Prostate gland (tissue), 2 donors: ENCODE measurements at regions of chr2 and their contacts with region 1.

Region 1: DNA sequence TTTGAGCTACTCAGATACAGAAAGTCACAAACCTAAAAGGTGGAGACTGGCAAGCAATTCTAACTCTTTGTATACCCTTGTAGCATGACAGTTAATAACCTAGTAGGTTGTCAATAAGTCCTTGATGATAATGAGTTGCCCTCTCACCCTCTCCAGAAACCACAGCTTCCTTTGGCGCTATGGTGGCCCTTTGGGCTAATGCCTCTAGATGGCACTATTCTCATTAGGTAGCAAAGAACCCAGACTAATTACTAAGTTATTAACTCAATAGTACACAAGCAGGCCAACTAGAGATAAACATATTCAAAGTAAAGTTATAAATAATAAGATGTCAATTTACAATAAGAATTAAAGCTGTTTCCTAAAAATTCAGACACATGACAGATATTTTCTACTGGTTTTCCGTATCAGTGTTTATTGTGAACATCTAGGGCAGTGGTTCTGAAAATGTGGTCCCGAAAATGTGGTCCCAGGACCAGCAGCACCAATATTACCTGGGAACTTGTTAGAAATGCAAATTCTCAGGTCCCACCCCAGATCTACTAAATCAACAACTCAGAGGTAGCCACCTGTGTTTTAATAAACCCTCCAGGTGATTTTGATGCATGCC is 41.1 kb downstream of the LDAH start:
- DNase-seq: no peak
- H3K4me3 ChIP-seq: no peak overlapping the region
- H3K27ac ChIP-seq: no peak overlapping the region
- H3K4me1 ChIP-seq: no peaks in the 10 kb centered on the region
- H3K27me3 ChIP-seq: no peaks in the 10 kb centered on the region
- CTCF ChIP-seq: peak in 3 of 4 experiments; percentile 50 to 65 (median 65)
- POLR2A ChIP-seq: no peak

Region 2: DNA sequence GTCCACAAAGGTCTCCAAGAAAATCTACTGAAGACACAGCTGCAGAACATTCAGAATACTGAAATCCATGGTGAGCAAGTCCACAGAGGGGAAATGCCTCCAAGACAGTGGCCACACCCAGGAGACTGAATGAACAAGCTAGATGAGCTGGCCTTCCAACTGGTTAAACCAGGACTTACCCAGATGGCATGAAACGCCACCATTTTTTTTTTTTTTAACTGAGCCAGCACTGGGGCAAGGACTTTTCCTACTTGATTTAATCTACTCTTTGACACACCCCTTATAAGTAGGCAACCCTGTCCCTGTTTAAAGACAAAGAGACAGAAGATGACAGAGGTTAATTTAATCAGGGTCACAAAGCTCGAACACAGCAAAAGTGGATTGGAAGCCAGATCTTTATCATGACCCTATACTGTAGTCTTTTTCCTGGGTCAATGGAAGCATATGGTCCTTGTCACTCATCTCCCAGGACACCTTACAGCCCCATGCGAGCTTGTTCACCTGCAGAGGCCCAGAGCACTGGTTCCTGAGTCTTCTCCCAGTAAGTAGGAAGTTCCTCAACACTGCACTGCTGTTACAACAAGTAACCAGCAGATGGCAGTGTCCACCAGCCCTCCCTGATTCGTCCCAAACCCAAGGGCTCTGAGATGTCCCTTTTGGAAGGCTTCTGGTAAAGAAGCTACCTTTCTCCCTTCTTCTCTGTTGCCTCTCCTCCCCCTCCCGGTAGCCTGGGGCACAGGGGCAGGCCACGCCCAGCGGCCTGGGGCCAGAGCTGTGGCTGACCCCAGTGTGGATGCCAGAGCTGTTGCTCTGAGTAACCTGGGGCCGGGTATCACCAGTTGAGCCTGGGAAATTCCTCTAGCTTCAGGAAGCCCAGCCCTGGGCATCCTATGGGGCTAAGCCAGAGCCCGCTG is 120.4 kb before region 1 on chr2:
- intact Hi-C with region 1: no loop called
- DNase-seq: peak; percentile 47
- H3K4me3 ChIP-seq: no peak overlapping the region
- H3K27ac ChIP-seq: no peak overlapping the region
- H3K4me1 ChIP-seq: peaks cover 4% of the 10 kb centered on the region
- H3K27me3 ChIP-seq: peaks cover 2% of the 10 kb centered on the region
- CTCF ChIP-seq: peak; percentile 94 to 98 (median 96)
- POLR2A ChIP-seq: no peak

Region 3: DNA sequence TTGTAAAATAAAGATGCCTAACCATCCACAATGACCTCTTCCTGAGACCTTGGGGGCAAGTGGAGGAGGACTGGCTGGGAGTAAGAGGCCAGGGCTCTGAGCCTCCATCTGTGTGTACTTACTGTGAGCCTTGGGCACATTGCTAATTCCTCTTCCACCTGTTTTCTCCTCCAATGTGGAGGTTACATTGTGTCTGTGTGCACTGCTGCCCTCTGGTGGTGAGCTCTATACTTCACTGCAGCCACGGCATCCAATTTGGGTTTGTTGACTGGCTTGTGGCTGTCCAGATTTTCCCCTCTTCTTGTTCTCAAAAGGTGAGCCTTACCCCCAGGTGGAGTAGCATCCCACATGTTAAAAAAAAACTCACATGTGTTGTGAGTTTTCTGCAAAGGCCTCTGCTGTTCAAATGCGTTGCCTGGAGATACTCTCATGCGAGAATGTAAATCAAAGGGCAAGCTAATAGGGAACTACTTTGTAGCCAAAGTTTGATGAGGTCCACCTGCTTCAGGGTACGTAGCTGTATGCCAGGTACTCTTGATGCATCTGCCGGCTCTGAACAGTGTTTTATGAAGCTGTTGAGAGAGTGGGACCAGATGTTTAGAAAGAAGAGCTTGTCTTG is 181.3 kb after region 1 on chr2:
- intact Hi-C with region 1: loop called (anchors 2 kb)
- DNase-seq: peak; percentile 68
- H3K4me3 ChIP-seq: no peak overlapping the region
- H3K27ac ChIP-seq: no peak overlapping the region
- H3K4me1 ChIP-seq: no peaks in the 10 kb centered on the region
- H3K27me3 ChIP-seq: no peaks in the 10 kb centered on the region
- CTCF ChIP-seq: peak; percentile 81 to 93 (median 88)
- POLR2A ChIP-seq: no peak

Region 4: DNA sequence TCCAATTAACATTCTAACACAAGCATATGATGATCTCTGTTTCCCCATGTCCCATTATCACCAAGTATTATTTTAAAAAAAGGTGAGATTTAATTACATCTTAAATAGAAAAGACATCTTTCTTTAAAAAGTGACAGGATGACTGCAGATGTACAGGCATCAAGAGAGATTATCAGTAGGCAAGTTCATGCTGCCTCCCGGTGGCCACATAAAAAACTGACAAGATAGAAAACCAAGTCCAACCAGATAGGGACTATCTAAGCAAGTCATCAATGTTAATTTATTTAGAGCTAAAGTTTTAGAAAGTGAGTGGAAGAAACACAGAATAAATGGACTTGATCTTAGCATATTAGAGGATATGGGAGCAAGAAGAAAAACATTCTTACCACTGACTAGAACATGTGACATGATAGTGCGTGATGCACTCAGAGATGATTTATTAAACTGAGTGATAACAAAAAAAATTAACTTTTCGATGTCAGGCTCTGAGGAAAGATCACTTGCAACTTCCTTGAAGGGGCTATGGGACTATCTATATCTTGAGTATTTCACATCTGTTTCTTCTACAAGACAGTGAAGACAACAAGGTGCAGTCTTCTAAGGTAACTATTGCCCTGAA is 336.6 kb after region 1 on chr2:
- intact Hi-C with region 1: loop called (anchors 10 kb)
- DNase-seq: no peak
- H3K4me3 ChIP-seq: no peak overlapping the region
- H3K27ac ChIP-seq: no peak overlapping the region
- H3K4me1 ChIP-seq: no peaks in the 10 kb centered on the region
- H3K27me3 ChIP-seq: no peaks in the 10 kb centered on the region
- CTCF ChIP-seq: peak in 3 of 4 experiments; percentile 42 to 66 (median 55)
- POLR2A ChIP-seq: no peak